H1 (cell line): ENCODE measurements at regions of chr12 and their contacts with region 1.

Region 1: DNA sequence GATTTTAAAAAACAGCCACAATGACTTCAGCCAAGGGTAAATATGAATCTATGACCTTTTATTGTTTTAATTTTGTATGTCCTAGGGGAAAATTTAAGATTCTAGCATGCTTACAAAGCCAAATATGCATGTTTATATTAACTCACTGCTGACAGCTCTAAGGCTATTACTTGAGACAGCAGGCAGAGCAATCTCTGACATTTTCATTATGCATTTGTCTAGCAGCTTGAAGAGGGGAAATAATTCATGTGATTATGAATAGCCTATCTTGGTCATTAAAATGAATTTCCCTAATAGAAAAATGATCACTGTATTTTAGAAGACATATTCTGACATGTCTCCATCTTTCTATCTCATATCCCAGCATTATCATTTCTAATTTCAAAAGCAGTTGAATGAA is 46.6 kb upstream of the HELB start:
- DNase-seq: no peak
- H3K4me3 ChIP-seq: no peak overlapping the region
- H3K27ac ChIP-seq: no peak overlapping the region
- H3K4me1 ChIP-seq: peaks cover 0 to 3% (median 0%) of the 10 kb centered on the region in 4 experiments; a peak in 1 of 7 replicates
- H3K27me3 ChIP-seq: no peaks in the 10 kb centered on the region
- CTCF ChIP-seq: no peak
- EP300 ChIP-seq: no peak
- POLR2A ChIP-seq: no peak
- RAD21 ChIP-seq: no peak

Region 2: DNA sequence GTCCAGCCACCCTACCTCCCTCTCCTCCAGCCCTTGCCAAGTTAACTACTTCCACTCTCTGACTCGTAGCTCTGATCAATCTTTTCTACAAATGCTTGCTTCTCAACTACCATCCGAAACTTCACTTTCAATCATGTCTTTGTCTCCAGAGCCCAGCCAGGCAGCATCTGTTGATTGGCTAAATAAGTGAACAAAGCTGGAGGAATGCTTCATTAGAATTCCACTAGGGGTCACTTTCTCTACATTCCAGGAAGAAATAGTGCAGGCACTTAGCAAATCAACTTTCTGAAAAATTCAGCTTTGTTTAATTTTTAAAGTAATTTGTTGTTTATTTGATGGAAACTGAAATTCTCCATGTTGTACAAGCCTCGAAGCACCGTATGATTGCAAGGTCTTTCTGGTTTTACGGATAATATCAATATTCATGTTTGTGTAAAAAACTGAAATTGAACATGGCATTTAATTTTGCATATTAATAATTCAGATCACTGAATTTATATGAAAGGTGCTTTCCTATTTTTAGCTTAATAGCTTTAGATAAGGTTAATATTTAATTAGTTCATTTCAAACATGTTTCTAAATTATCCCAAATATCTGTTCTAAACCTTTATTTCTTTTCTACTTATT is 14.1 kb after region 1 on chr12:
- CTCF ChIA-PET with region 1: interaction called, 10 read pairs
- POLR2A ChIA-PET with region 1: interaction called, 3 read pairs
- DNase-seq: no peak
- H3K4me3 ChIP-seq: no peak overlapping the region
- H3K27ac ChIP-seq: no peak overlapping the region
- H3K4me1 ChIP-seq: peaks cover 0 to 4% (median 1%) of the 10 kb centered on the region in 4 experiments; a peak in 2 of 7 replicates
- H3K27me3 ChIP-seq: no peaks in the 10 kb centered on the region
- CTCF ChIP-seq: peak in 2 of 3 experiments; percentile 41 to 62; a peak in 2 of 4 replicates
- EP300 ChIP-seq: no peak
- POLR2A ChIP-seq: no peak
- RAD21 ChIP-seq: peak; percentile 47 to 58; a peak in 3 of 4 replicates